CD4-positive, alpha-beta memory T cell (primary cell): ENCODE measurements at regions of chr9 and their contacts with region 1.

Region 1: DNA sequence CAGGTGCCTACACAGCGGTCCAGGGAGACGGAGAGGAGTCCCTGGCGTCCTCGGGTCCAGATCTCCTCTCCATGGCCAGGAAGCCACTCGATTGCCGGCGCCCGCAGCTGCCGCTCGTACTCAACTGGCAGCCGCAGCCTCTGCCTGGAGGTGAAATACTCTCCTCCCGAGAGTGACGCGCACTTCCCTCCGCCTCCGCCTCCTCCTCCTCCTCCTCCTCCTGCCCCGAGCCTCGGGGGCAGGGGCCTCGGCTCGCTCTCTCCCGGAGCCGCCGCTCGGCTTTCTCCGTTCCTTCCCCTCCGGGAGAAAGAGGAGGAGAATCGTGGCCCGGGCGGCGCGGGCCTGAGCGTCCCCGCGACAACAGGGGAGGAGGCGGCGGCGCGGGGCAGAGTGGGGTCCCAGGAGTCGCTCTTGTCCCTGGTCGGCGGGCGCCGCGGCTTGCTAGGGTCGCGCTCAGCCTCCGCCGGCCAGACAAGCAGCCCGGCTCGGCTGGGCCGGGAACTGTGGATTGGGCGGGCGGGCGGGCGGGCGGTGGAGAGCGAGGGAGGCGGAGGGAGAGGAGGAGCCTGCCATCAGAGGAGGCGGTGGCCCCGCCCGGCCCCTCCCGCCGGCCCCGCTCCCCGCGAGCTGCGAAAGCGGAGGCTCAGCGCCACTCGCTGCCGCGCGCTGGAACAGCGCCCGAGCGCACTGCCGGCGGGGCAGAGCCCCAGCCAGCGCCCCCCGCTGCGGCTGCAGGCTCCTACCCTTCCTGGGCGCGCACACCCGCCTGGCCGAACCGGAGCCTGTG is at the start of gene CEMIP2:
- DNase-seq: peak; percentile 87 to 92 (median 90)
- H3K4me3 ChIP-seq: peak within 1 kb of the TSS; percentile 82 to 86
- H3K4me3 Mint-ChIP-seq: peak within 1 kb of the TSS; percentile 95 to 99 (median 97)
- H3K27ac ChIP-seq: peak within 1 kb of the TSS; percentile 87
- H3K27ac Mint-ChIP-seq: peak within 1 kb of the TSS; percentile 97 to 99 (median 98)
- H3K4me1 ChIP-seq: peaks cover 42% of the 10 kb centered on the region
- H3K4me1 Mint-ChIP-seq: peaks cover 32 to 56% (median 38%) of the 10 kb centered on the region in 4 donors
- H3K27me3 ChIP-seq: no peaks in the 10 kb centered on the region
- H3K27me3 Mint-ChIP-seq: no peaks in the 10 kb centered on the region
- total RNA-seq, gene CEMIP2: 85.8 to 89.4 TPM

Region 2: GRCh38 chr9:71285191-71285656 is 483.4 kb before region 1 on chr9:
- CTCF ChIA-PET with region 1: interaction called, 3 read pairs
- POLR2A ChIA-PET with region 1: no interaction called
- intact Hi-C with region 1: loop called (anchors 1 kb)
- DNase-seq: peak; percentile 30 to 45 (median 36)
- H3K4me3 ChIP-seq: no peak overlapping the region
- H3K4me3 Mint-ChIP-seq: no peak overlapping the region
- H3K27ac ChIP-seq: no peak overlapping the region
- H3K27ac Mint-ChIP-seq: no peak overlapping the region
- H3K4me1 ChIP-seq: no peaks in the 10 kb centered on the region
- H3K4me1 Mint-ChIP-seq: no peaks in the 10 kb centered on the region
- H3K27me3 ChIP-seq: no peaks in the 10 kb centered on the region
- H3K27me3 Mint-ChIP-seq: peaks cover 0 to 5% of the 10 kb centered on the region in 2 donors

Region 3: DNA sequence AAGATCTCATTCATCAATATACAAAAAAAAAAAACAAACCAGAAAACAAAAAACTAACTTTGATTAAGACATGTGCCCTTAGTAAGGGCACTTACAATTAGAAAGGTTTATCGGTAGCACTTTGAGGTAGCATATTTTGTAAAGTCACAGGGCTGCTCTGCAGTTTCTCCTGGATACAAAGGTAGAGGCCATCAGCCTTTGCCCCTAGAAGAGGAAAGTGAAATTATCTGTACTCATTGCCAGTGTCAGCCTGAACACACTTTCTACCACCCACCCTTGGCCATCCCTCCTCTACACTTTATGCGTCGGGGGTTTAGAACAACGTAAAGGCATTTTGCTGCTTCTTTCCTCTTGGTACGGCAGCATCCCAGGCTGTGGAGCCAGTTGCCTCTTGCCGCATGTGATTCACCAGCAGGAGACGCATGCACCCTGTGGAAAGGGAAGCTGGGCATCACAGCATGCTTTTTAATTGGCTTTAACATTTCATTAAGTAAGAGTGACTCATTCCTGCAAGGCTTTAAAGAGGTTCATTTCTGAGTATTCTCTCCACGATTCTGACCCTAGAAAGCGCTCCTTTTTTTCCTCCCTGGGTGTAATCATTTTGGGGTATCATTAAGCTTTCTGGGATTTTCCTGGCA is 84.9 kb before region 1 on chr9:
- CTCF ChIA-PET with region 1: interaction called, 21 read pairs
- POLR2A ChIA-PET with region 1: interaction called, 20 read pairs
- intact Hi-C with region 1: loop called (anchors 1 kb)
- DNase-seq: no peak
- H3K4me3 ChIP-seq: no peak overlapping the region
- H3K4me3 Mint-ChIP-seq: peak overlapping the region; percentile 31 to 79 (median 69)
- H3K27ac ChIP-seq: no peak overlapping the region
- H3K27ac Mint-ChIP-seq: peak overlapping the region; percentile 8 to 90 (median 72)
- H3K4me1 ChIP-seq: peaks cover 37% of the 10 kb centered on the region
- H3K4me1 Mint-ChIP-seq: peaks cover 36 to 59% (median 48%) of the 10 kb centered on the region in 4 donors
- H3K27me3 ChIP-seq: no peaks in the 10 kb centered on the region
- H3K27me3 Mint-ChIP-seq: no peaks in the 10 kb centered on the region

Region 4: GRCh38 chr9:71748280-71748743 is 20.3 kb before region 1 on chr9:
- CTCF ChIA-PET with region 1: interaction called, 5 read pairs
- POLR2A ChIA-PET with region 1: interaction called, 12 read pairs
- intact Hi-C with region 1: no loop called
- DNase-seq: no peak
- H3K4me3 ChIP-seq: no peak overlapping the region
- H3K4me3 Mint-ChIP-seq: no peak overlapping the region
- H3K27ac ChIP-seq: no peak overlapping the region
- H3K27ac Mint-ChIP-seq: peak overlapping the region in 2 of 7 donors; percentile 45 to 58
- H3K4me1 ChIP-seq: peaks cover 15% of the 10 kb centered on the region
- H3K4me1 Mint-ChIP-seq: peaks cover 27 to 35% (median 30%) of the 10 kb centered on the region in 4 donors
- H3K27me3 ChIP-seq: no peaks in the 10 kb centered on the region
- H3K27me3 Mint-ChIP-seq: no peaks in the 10 kb centered on the region

Region 5: GRCh38 chr9:71801826-71802225 is 33.2 kb after region 1 on chr9:
- CTCF ChIA-PET with region 1: interaction called, 70 read pairs
- POLR2A ChIA-PET with region 1: interaction called, 82 read pairs
- intact Hi-C with region 1: loop called (anchors 2 kb)
- DNase-seq: no peak
- H3K4me3 ChIP-seq: no peak overlapping the region
- H3K4me3 Mint-ChIP-seq: no peak overlapping the region
- H3K27ac ChIP-seq: no peak overlapping the region
- H3K27ac Mint-ChIP-seq: no peak overlapping the region
- H3K4me1 ChIP-seq: peaks cover 17% of the 10 kb centered on the region
- H3K4me1 Mint-ChIP-seq: peaks cover 8 to 13% (median 11%) of the 10 kb centered on the region in 4 donors
- H3K27me3 ChIP-seq: no peaks in the 10 kb centered on the region
- H3K27me3 Mint-ChIP-seq: no peaks in the 10 kb centered on the region

Region 6: DNA sequence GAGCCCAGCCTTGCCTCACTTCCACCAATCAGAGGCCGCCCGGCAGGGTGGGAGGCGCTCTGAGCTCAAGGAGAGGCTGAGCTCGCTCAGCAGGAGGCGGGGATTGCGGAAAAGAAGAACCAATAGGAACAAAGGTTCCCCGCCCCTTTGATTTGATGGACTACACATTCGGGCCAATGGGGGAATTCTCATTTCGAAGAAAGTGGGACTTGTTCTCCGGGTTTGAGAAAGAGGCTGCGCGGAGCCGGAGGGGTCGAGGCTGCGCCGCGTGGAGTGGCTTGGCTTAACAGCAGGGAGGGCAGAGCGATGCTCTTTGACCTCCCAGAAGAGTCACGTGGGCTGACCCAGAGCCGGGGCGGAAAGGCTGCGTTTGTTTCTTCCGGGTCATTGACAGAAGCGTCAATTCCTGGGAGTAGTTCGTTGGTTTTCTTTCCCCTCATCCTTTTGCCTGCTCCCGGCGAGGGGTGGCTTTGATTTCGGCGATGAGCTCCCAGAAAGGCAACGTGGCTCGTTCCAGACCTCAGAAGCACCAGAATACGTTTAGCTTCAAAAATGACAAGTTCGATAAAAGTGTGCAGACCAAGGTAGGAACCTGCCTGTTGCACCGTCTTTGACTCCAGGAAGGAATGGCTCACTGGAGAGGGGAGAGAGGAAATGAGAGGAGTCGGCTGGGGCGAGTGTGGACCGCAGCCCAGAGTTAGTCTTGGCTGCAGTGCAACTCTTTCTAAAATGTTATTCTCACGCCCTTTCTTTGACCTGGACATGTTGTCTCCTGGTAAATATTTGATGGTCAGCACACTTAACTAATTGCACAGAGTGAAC is 142.9 kb after region 1 on chr9 and contains the start of gene C9orf85:
- CTCF ChIA-PET with region 1: interaction called, 3 read pairs
- POLR2A ChIA-PET with region 1: interaction called, 20 read pairs
- intact Hi-C with region 1: loop called (anchors 1 kb)
- DNase-seq: peak; percentile 94 to 98 (median 96)
- H3K4me3 ChIP-seq: peak within 1 kb of the TSS; percentile 77 to 83
- H3K4me3 Mint-ChIP-seq: peak within 1 kb of the TSS; percentile 99 to 100 (median 100)
- H3K27ac ChIP-seq: peak within 1 kb of the TSS; percentile 74
- H3K27ac Mint-ChIP-seq: peak within 1 kb of the TSS; percentile 92 to 100 (median 97)
- H3K4me1 ChIP-seq: peaks cover 51% of the 10 kb centered on the region
- H3K4me1 Mint-ChIP-seq: peaks cover 46 to 76% (median 54%) of the 10 kb centered on the region in 4 donors
- H3K27me3 ChIP-seq: no peaks in the 10 kb centered on the region
- H3K27me3 Mint-ChIP-seq: no peaks in the 10 kb centered on the region
- total RNA-seq, gene C9orf85: 8.2 to 10.6 TPM